CD4-positive, alpha-beta T cell (primary cell): ENCODE measurements at regions of chr21 and their contacts with region 1.

Region 1: GRCh38 chr21:38505654-38506515 is 7.6 kb upstream of the ERG start:
- DNase-seq: peak in 2 of 14 experiments; percentile 49 to 53
- ATAC-seq: no peak
- H3K4me3 ChIP-seq: no peak overlapping the region
- H3K4me3 Mint-ChIP-seq: peak overlapping the region; percentile 30
- H3K27ac ChIP-seq: no peak overlapping the region
- H3K27ac Mint-ChIP-seq: no peak overlapping the region
- H3K4me1 ChIP-seq: peaks cover 6% of the 10 kb centered on the region
- H3K4me1 Mint-ChIP-seq: peaks cover 15% of the 10 kb centered on the region
- H3K27me3 ChIP-seq: peaks cover 8 to 13% of the 10 kb centered on the region in 2 experiments
- H3K27me3 Mint-ChIP-seq: peaks cover 46% of the 10 kb centered on the region
- CTCF ChIP-seq: peak; percentile 37

Region 2: GRCh38 chr21:38544661-38545060 is 38.8 kb after region 1 on chr21:
- CTCF ChIA-PET with region 1: no interaction called
- POLR2A ChIA-PET with region 1: no interaction called
- intact Hi-C with region 1: no loop called
- DNase-seq: no peak
- ATAC-seq: no peak
- H3K4me3 ChIP-seq: no peak overlapping the region
- H3K4me3 Mint-ChIP-seq: no peak overlapping the region
- H3K27ac ChIP-seq: no peak overlapping the region
- H3K27ac Mint-ChIP-seq: no peak overlapping the region
- H3K4me1 ChIP-seq: no peaks in the 10 kb centered on the region
- H3K4me1 Mint-ChIP-seq: no peaks in the 10 kb centered on the region
- H3K27me3 ChIP-seq: no peaks in the 10 kb centered on the region
- H3K27me3 Mint-ChIP-seq: peaks cover 1% of the 10 kb centered on the region
- CTCF ChIP-seq: no peak

Region 3: DNA sequence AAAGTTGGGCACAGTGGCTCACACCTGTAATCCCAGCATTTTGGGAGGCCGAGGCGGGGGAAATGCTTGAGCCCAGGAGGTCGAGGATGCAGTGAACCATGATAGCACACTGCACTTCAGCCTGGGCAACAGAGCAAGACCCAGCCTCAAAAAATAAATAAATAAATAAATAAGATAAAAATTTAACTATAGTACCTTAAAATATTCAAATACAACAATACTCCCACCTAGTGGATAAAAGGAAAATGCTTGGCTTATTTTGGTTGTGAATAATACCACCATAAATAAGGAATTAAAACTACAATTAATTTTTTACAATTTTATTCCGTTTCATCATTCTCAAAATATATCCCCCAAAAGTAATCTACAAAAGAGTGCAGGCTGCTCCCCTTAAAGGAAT is 669.3 kb after region 1 on chr21:
- CTCF ChIA-PET with region 1: no interaction called
- POLR2A ChIA-PET with region 1: no interaction called
- intact Hi-C with region 1: loop called in 1 of 2 experiments (anchors 10 kb)
- DNase-seq: peak in 3 of 14 experiments; percentile 15 to 38 (median 35)
- ATAC-seq: no peak
- H3K4me3 ChIP-seq: no peak overlapping the region
- H3K4me3 Mint-ChIP-seq: no peak overlapping the region
- H3K27ac ChIP-seq: no peak overlapping the region
- H3K27ac Mint-ChIP-seq: no peak overlapping the region
- H3K4me1 ChIP-seq: no peaks in the 10 kb centered on the region
- H3K4me1 Mint-ChIP-seq: peaks cover 10% of the 10 kb centered on the region
- H3K27me3 ChIP-seq: no peaks in the 10 kb centered on the region
- H3K27me3 Mint-ChIP-seq: no peaks in the 10 kb centered on the region
- CTCF ChIP-seq: peak; percentile 49